Activated T-helper 1 cell treated with anti-CD3 and anti-CD28 coated beads, Interleukin-12 subunit alpha, Interleukin-12 subunit beta, Interleukin-2, Interleukin-4 antibody, amounts not matched to agents 30 ng/mL and 10 ng/mL and 1 ng/mL, durations not matched to agents 14 hours and 24 hours and 36 hours (primary cell): ENCODE measurements at regions of chr5 and their contacts with region 1.

Region 1: DNA sequence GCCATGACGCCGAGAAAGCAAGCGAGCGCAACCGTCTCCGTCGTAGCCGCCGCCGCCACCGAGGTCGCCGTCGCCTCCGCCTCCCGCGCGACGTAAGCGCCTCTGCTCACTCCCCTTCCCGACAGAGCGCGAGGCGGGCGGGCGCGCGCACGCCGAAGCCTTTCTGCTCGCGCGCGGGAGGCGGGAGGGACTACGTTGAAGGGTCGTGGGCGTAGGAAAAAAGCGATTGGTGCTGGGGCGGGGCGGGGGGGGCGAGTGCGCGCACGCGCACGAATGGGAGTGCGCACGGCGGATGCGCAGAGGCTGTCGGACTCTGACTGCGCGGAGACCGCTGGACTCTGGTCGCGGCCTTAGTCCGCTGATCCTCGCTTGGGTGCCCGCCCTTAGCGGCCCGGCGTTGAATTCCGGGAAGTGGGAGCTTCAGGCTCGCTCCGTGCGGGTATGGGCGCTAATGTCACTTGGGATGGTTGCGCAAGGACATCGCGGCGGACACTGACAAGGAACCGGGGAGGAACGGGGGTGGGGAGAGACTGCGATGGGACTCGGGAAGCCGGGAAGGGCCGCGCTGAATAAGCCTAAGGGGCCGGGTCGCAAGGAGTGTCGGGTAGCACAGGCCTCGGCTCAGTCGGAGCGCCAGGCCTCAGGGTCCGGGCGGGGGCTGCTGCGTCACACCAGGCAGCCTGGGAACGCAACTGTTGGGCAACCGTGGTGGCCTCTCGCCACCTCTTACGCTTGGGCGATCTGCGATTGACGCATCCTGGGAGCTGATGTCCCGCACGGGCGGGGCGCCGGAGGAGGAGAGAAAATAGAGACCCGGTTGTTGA is at the start of gene CHD1:
- DNase-seq: peak; percentile 93
- H3K4me3 Mint-ChIP-seq: peak within 1 kb of the TSS; percentile 98
- H3K27ac Mint-ChIP-seq: peak within 1 kb of the TSS; percentile 99
- H3K4me1 Mint-ChIP-seq: peaks cover 71% of the 10 kb centered on the region
- H3K27me3 Mint-ChIP-seq: no peaks in the 10 kb centered on the region
- total RNA-seq, gene CHD1: 83.0 and 83.3 TPM in 2 replicates

Region 2: DNA sequence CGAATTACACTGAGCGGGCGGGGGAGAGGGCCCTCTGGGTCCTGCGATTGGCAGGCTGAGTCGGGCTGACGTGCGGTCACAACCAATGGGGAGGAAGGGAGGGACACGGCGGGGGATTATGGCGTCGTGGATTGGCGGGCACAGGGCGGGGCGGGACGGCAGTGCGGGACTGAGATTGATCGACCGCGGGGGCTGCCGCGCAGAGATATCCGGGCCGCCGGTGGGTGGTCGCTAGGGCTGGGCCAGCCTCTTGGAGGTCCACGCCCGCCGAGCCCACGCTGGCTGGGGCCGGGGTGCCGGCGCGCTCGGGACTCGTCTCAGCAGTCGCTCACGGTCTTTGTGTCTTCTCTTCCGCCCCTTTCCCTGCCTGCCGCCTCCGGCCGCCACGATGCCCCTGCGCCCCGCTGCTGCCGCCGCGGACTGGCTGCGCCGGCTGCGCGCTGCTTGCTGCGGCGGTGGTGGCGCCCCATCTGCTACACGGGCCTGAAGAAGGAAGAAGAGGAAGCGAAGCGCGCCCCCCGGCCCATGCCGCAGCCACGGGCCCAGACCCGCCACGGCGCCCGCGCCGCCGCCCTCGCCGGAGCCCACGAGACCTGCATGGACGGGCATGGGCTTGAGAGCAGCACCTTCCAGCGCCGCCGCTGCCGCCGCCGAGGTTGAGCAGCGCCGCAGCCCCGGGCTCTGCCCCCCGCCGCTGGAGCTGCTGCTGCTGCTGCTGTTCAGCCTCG is 155.5 kb before region 1 on chr5 and contains the start of gene RGMB:
- intact Hi-C with region 1: loop called (anchors 2 kb)
- DNase-seq: peak; percentile 77
- H3K4me3 Mint-ChIP-seq: peak within 1 kb of the TSS; percentile 93
- H3K27ac Mint-ChIP-seq: peak within 1 kb of the TSS; percentile 52
- H3K4me1 Mint-ChIP-seq: peaks cover 50% of the 10 kb centered on the region
- H3K27me3 Mint-ChIP-seq: peaks cover 79% of the 10 kb centered on the region
- total RNA-seq, gene RGMB: 0.29 and 0.39 TPM in 2 replicates

Region 3: GRCh38 chr5:98905857-98906690 is 23.0 kb before region 1 on chr5:
- intact Hi-C with region 1: loop called (anchors 1 kb)
- DNase-seq: no peak
- H3K4me3 Mint-ChIP-seq: no peak overlapping the region
- H3K27ac Mint-ChIP-seq: no peak overlapping the region
- H3K4me1 Mint-ChIP-seq: peaks cover 56% of the 10 kb centered on the region
- H3K27me3 Mint-ChIP-seq: no peaks in the 10 kb centered on the region

Region 4: DNA sequence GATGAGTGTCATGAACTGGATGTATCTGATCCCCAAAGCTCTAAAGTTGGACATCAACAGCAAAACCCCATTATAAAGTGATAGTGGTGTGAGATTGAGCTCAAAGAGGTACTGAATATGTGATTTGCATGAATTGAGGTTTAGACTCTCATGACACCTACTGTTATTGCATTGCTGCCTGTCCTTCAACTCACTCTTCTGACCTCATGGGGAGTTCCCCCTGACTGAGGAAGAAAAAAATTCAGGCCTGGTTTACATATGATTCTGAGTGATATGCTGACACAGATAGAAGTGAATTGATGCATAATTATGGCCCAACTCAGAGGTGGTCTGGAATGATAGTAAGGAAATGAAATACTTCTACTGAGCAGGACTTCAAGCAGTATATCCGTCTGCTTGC is 75.9 kb after region 1 on chr5:
- intact Hi-C with region 1: loop called (anchors 1 kb)
- DNase-seq: peak; percentile 10
- H3K4me3 Mint-ChIP-seq: no peak overlapping the region
- H3K27ac Mint-ChIP-seq: no peak overlapping the region
- H3K4me1 Mint-ChIP-seq: peaks cover 21% of the 10 kb centered on the region
- H3K27me3 Mint-ChIP-seq: peaks cover 4% of the 10 kb centered on the region

Region 5: DNA sequence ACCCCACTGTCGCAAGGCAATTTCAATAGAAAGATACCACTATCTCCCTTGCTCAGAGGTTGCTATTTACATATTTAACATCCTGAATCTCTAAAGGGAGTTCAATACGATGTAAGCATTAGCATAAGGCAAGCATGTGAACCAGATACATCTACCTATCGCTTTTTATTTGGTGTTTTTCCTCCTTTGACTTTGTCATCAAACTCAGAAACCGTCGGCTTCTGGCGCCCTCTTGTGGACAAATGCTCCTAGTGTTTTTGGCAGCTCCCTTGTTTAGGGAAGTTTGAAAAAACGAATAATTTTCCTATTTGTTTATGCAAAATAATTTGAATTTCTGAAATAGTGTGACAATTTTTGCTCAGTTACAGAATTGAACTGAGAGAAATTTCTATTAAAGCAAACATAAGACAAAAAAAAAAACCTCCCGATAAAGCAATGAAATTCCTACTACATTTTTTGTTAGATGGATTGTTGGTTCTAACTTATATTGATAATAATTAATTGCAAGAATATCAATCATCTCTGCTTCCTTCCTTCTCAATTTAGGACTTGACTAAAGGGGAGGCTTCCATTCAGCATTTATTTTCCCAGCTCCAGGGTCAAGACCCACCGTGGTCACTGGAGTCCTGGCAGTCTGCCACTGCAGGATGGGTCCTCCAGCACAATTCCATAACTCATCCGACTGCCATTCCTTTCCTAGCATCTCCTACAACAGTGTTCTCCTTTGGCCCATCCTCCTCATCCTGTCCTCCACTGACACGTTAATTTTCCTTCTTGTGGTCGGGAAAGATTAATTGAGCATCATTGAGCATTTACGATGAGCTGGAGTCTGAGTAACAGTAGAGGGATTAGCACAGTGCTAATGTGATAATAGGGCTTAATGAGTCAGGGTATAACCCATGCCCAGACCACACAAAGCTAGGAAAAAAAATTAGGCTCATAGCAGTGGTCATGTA is 131.5 kb after region 1 on chr5:
- intact Hi-C with region 1: loop called (anchors 1 kb)
- DNase-seq: peak; percentile 69
- H3K4me3 Mint-ChIP-seq: no peak overlapping the region
- H3K27ac Mint-ChIP-seq: no peak overlapping the region
- H3K4me1 Mint-ChIP-seq: peaks cover 5% of the 10 kb centered on the region
- H3K27me3 Mint-ChIP-seq: peaks cover 16% of the 10 kb centered on the region